Activated CD4-positive, alpha-beta T cell treated with anti-CD3 and anti-CD28 coated beads, Interleukin-2, amount 10 ng/mL, durations not matched to agents 24 days and 14 days (primary cell): ENCODE measurements at regions of chr17 and their contacts with region 1.

Region 1: DNA sequence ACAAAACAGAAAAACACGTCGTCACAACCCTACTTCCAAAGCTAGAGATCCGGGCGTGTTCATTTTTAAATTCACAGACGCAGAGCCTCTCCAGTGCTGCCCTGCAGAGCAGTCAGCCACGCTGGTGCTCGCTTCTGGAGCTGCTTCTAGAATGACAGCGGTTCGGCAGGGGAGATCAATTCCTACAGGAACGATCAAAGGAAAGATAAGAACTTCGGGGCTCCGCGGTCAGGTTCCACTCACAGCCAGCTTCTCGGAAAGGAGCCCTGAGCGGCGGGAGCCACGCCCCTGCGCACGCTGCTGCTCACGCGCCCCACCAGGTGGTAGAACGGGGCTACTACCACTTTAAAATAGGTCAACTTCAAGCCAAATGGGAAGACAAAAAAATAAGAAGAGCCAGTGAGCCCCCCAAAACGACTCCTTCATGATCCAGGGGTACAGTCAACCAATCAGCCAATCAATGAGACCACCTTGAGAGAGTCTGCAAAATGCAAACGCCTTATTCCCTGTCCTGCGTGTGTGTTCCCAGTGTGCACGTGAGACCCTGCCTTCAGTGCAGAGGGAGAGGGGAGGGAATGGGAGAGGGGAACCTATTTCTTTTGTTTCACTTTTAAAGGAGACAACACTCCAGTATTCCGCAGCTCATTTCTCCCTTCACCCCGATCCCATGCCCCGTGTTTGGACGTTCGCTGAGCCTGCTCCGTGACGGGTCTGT is 209.7 kb downstream of the RBFOX3 start:
- DNase-seq: peak; percentile 93
- H3K4me3 Mint-ChIP-seq: peak overlapping the region; percentile 84
- H3K27ac Mint-ChIP-seq: no peak overlapping the region
- H3K4me1 Mint-ChIP-seq: peaks cover 12% of the 10 kb centered on the region
- H3K27me3 Mint-ChIP-seq: peaks cover 16% of the 10 kb centered on the region

Region 2: DNA sequence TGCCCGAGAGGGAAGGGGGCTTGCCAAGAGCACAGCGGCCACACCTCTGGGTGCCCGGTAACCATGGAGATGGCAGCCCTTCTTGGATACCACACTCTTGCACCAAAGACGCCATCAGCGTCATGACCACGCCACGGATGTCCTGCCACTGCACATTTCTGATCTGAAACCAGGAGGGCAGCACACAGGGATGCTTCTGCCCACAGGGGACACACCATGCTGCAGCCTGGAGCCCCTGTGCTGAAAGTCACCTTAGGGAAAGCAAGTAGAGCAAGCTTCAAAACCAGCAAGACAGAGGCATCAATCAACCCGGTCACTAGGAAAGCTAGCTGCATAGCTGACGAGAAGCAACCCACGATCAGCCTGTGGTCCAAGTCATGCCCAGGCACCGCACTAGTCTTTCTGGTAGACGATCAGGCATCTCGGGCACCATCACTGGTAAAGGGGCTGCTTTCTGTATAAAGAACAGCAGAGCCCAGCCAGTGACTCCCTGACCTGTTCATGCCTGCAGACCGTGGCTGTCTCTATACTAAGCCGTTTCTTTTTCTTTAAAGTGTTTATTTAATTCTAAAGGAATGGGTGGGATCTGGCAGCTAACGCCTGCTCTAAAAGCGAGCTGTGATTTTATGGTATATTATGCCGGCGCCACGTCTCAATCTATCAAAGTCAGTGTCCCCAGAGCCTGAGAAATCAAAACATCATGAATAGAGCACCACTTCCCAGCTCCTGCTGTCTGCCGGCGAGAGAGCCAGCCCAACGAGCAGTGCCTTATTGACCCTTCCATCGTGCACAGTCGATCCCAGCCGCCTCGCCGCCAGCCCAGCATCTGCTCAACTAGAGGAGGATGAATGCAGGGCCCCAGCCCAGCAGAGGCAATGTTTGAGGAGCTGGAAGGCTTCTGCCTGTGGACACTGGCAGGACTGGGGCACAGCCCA is 35.0 kb before region 1 on chr17:
- intact Hi-C with region 1: no loop called
- DNase-seq: no peak
- H3K4me3 Mint-ChIP-seq: no peak overlapping the region
- H3K27ac Mint-ChIP-seq: no peak overlapping the region
- H3K4me1 Mint-ChIP-seq: no peaks in the 10 kb centered on the region
- H3K27me3 Mint-ChIP-seq: peaks cover 2% of the 10 kb centered on the region

Region 3: DNA sequence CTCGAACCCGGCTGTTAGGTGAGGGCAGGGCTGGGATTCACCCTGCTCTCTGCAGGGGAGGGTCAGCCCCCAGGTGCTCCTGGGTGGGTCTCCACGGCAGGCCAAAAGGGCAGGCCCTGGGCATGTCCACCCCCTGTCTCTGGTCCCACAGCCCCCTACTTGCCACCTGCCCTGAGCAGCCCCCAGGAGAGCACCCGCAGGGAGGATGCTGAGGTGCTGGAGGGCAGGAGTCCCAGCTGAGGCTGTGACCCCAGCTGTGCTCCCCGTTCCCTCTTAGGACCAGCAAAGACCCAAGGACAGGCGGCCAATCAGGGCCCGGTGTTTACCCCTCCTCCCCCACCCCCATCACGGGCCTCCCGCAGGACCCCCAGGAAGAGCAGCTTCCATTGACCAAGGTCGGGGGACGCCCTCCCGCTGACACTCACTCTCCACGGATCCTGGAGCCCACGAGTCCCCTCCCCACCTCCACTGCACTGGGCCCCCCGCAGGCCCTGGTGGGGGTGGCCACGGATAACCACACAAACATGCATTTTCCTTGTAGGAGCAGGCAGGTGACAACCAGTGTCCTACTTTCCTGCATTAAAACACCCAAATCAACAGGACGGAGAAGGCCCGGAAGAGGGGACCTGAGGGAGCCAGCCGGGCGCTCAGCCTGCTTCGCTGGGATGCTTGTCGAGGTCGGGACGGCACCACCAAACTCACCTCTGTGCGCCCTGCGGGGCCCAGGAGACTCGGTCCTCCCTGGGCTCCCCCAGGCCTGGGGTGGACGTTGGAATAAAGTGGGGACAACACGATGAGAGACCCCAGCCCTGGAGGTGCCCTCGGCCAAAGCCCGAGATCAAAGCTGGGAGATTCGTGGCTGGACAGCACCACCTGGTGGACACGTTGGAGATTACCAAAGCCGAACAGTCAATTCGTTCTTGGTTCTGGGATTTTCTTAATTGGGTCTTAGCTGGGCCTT is 307.1 kb after region 1 on chr17:
- intact Hi-C with region 1: loop called (anchors 10 kb)
- DNase-seq: peak; percentile 88
- H3K4me3 Mint-ChIP-seq: no peak overlapping the region
- H3K27ac Mint-ChIP-seq: no peak overlapping the region
- H3K4me1 Mint-ChIP-seq: no peaks in the 10 kb centered on the region
- H3K27me3 Mint-ChIP-seq: no peaks in the 10 kb centered on the region